IMR-90 (cell line): ENCODE measurements at regions of chr5 and their contacts with region 1.

Region 1: GRCh38 chr5:59218424-59219045 is 635.7 kb downstream of the RAB3C start:
- DNase-seq: peak; percentile 3
- ATAC-seq: no peak; the same call in 1 of the 2 replicates
- H3K4me3 ChIP-seq: no peak overlapping the region
- H3K27ac ChIP-seq: no peak overlapping the region
- H3K4me1 ChIP-seq: no peaks in the 10 kb centered on the region
- H3K27me3 ChIP-seq: peaks cover 8% of the 10 kb centered on the region
- CTCF ChIP-seq: peak; percentile 35; the same call in 1 of the 2 replicates
- POLR2A ChIP-seq: no peak
- RAD21 ChIP-seq: peak; percentile 28

Region 2: GRCh38 chr5:59367791-59368394 is 149.4 kb after region 1 on chr5:
- CTCF ChIA-PET with region 1: interaction called, 3 read pairs
- POLR2A ChIA-PET with region 1: no interaction called
- dilution Hi-C with region 1: no loop called
- in situ Hi-C with region 1: no loop called
- intact Hi-C with region 1: loop called (anchors 1 kb)
- DNase-seq: peak; percentile 66
- ATAC-seq: peak; percentile 70
- H3K4me3 ChIP-seq: no peak overlapping the region
- H3K27ac ChIP-seq: no peak overlapping the region
- H3K4me1 ChIP-seq: no peaks in the 10 kb centered on the region
- H3K27me3 ChIP-seq: peaks cover 15% of the 10 kb centered on the region
- CTCF ChIP-seq: peak; percentile 74
- POLR2A ChIP-seq: no peak
- RAD21 ChIP-seq: peak; percentile 68

Region 3: DNA sequence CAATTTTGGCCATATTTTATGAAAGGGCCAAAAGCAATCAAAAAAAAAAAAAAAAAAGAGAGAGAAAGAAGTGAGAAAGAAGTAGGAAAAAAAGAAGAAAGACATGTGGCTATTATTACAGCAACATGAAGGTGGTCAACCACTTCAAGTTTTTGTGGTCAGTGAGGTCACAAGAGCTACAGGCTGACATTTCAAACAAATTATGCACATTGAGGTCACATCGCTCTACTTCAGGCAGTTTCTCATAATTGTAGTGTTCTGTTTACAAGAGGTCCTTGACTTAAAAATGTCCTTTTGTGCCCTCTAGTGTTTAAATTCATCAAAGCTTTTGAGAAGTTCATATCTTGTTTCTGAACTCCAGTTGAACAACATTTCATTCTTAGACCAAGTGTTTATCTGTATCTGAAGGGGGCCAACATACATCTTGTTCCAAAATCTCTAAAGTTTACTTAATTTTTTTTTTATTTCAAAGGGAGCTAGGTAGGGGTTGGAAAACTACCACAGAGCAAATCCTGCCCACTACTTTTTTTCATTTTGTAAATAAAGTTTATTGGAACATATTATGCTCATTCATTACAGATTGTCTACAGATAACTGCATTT is 161.9 kb after region 1 on chr5:
- CTCF ChIA-PET with region 1: no interaction called
- POLR2A ChIA-PET with region 1: no interaction called
- dilution Hi-C with region 1: no loop called
- in situ Hi-C with region 1: no loop called
- intact Hi-C with region 1: loop called (anchors 1 kb)
- DNase-seq: peak; percentile 71
- ATAC-seq: peak; percentile 77
- H3K4me3 ChIP-seq: no peak overlapping the region
- H3K27ac ChIP-seq: no peak overlapping the region
- H3K4me1 ChIP-seq: no peaks in the 10 kb centered on the region
- H3K27me3 ChIP-seq: no peaks in the 10 kb centered on the region; the same call in 1 of the 2 replicates
- CTCF ChIP-seq: peak; percentile 51
- POLR2A ChIP-seq: no peak
- RAD21 ChIP-seq: peak; percentile 52